Prostate gland (tissue), 2 donors: ENCODE measurements at regions of chr12 and their contacts with region 1.

Region 1: DNA sequence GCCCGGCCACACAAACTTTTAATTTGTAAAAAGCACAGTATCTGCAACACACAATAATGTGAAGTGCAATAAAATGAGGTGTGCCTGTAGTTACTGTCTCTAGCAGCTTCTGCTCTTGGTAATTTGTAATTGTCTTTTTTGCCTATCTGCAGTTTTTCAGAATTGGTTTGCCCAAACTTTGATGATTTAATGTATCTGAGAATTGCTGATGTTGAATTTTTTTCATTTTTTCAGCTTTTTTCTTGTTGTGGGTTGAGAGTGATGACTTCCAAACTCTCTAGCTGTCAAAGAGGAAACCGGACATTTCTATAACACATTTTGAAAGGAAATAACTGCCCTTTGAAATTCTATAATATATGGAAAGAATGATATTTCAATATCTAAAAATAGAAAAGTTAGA is 236.9 kb downstream of the RERGL start:
- DNase-seq: no peak
- H3K4me3 ChIP-seq: no peak overlapping the region
- H3K27ac ChIP-seq: no peak overlapping the region
- H3K4me1 ChIP-seq: no peaks in the 10 kb centered on the region
- H3K27me3 ChIP-seq: no peaks in the 10 kb centered on the region
- CTCF ChIP-seq: no peak
- POLR2A ChIP-seq: no peak

Region 2: GRCh38 chr12:17609153-17609552 is 243.9 kb before region 1 on chr12:
- intact Hi-C with region 1: no loop called
- DNase-seq: no peak
- H3K4me3 ChIP-seq: no peak overlapping the region
- H3K27ac ChIP-seq: no peak overlapping the region
- H3K4me1 ChIP-seq: no peaks in the 10 kb centered on the region
- H3K27me3 ChIP-seq: no peaks in the 10 kb centered on the region
- CTCF ChIP-seq: no peak
- POLR2A ChIP-seq: no peak

Region 3: GRCh38 chr12:17763366-17763765 is 89.7 kb before region 1 on chr12:
- intact Hi-C with region 1: loop called (anchors 5 kb)
- DNase-seq: no peak
- H3K4me3 ChIP-seq: no peak overlapping the region
- H3K27ac ChIP-seq: no peak overlapping the region
- H3K4me1 ChIP-seq: no peaks in the 10 kb centered on the region
- H3K27me3 ChIP-seq: no peaks in the 10 kb centered on the region
- CTCF ChIP-seq: no peak
- POLR2A ChIP-seq: no peak